ENCODE measurements at regions of chr2 and their contacts with region 1.

Region 1: GRCh38 chr2:203484266-203485112 is 50.6 kb downstream of the RAPH1 start:
- DNase-seq: peak; percentile 82
- H3K4me3 ChIP-seq: no peak overlapping the region
- H3K27ac ChIP-seq: peak overlapping the region; percentile 48
- H3K4me1 ChIP-seq: peaks cover 25% of the 10 kb centered on the region
- CTCF ChIP-seq: peak; percentile 99

Region 2: GRCh38 chr2:203446071-203446481 is 38.4 kb before region 1 on chr2:
- CTCF ChIA-PET with region 1: no interaction called
- POLR2A ChIA-PET with region 1: no interaction called
- intact Hi-C with region 1: no loop called
- DNase-seq: no peak
- H3K4me3 ChIP-seq: no peak overlapping the region
- H3K27ac ChIP-seq: no peak overlapping the region
- H3K4me1 ChIP-seq: no peaks in the 10 kb centered on the region
- CTCF ChIP-seq: no peak

Region 3: GRCh38 chr2:203469554-203469953 is 14.9 kb before region 1 on chr2:
- CTCF ChIA-PET with region 1: no interaction called
- POLR2A ChIA-PET with region 1: interaction called, 11 read pairs
- intact Hi-C with region 1: no loop called
- DNase-seq: no peak
- H3K4me3 ChIP-seq: no peak overlapping the region
- H3K27ac ChIP-seq: no peak overlapping the region
- H3K4me1 ChIP-seq: no peaks in the 10 kb centered on the region
- CTCF ChIP-seq: no peak

Region 4: GRCh38 chr2:203909261-203909967 is 424.9 kb after region 1 on chr2:
- CTCF ChIA-PET with region 1: no interaction called
- POLR2A ChIA-PET with region 1: no interaction called
- intact Hi-C with region 1: loop called (anchors 2 kb)
- DNase-seq: peak; percentile 42
- H3K4me3 ChIP-seq: no peak overlapping the region
- H3K27ac ChIP-seq: no peak overlapping the region
- H3K4me1 ChIP-seq: peaks cover 7% of the 10 kb centered on the region
- CTCF ChIP-seq: peak; percentile 93

Region 5: DNA sequence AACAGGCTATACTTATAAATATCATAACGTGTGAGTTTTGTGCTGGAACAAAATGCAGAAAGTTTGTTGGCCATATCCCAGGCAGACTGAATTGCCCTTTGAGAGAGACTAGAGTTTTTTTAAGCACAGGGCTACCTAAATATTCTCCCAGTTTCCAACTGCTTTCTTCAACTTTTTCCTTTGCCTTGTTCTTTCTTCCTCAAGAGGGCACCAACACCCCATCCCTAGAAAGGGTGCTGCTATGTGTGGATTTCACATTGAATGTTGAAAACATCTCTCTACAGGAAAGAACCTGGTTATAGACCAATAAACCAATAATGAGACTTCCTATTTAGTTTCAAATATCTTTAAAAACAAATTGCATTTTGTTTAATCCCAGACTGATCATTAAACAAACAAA is 540.0 kb after region 1 on chr2:
- CTCF ChIA-PET with region 1: no interaction called
- POLR2A ChIA-PET with region 1: no interaction called
- intact Hi-C with region 1: no loop called
- DNase-seq: peak; percentile 68
- H3K4me3 ChIP-seq: no peak overlapping the region
- H3K27ac ChIP-seq: no peak overlapping the region
- H3K4me1 ChIP-seq: peaks cover 22% of the 10 kb centered on the region
- CTCF ChIP-seq: peak; percentile 88